ENCODE measurements at regions of chr14 and their contacts with region 1.

Region 1: GRCh38 chr14:24051789-24052655 is at the start of gene CARMIL3:
- DNase-seq: peak; percentile 12 to 82 (median 56)
- ATAC-seq: peak; percentile 75
- H3K4me3 ChIP-seq: peak within 1 kb of the TSS; percentile 72 to 76
- H3K4me3 Mint-ChIP-seq: peak within 1 kb of the TSS; percentile 88
- H3K27ac ChIP-seq: no peak within 1 kb of the TSS
- H3K27ac Mint-ChIP-seq: peak within 1 kb of the TSS; percentile 64
- H3K4me1 ChIP-seq: peaks cover 18% of the 10 kb centered on the region
- H3K4me1 Mint-ChIP-seq: peaks cover 14% of the 10 kb centered on the region
- H3K27me3 ChIP-seq: no peaks in the 10 kb centered on the region
- H3K27me3 Mint-ChIP-seq: peaks cover 11% of the 10 kb centered on the region
- CTCF ChIP-seq: no peak
- total RNA-seq, gene CARMIL3: 0.14 to 0.19 TPM

Region 2: DNA sequence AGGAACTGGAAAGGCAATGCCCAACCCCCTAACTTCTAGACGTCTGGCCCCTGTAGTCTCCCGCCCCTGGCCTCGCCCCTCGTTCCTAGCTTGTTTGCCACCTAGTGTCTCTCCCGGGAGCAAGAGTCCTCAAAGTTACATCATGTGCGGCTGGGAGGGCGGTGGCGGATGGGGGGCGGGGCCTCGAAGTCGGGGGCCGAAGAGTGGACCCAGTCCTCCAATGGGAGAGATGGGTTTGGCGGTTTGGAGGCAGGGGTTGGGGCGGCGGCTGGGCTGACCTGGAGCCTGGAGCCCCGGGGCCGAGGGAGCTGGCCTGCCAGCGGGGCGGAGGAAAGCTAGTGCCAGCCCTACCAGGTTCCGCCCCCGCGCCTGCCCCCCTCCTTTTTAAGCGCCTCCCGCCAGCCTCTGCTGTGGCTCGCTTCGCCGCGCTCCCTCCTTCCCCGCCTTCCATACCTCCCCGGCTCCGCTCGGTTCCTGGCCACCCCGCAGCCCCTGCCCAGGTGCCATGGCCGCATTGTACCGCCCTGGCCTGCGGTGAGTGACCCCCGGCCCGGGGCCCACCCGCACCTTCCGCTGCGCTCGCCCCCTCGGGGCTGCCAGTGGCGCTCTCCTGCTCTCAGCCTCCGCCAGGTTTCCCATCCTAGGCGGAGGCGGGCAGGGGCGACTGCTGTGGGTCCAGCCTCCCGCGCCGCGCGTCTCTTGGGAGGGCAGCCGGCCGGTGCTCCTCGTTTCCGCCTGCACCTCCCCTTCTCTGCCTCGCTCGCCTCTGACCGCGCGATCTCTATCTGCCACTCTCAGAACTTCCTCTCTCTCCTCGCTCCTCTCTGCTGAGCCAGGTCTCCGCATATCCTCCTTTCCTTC is 42.1 kb after region 1 on chr14 and contains the start of gene PCK2:
- CTCF ChIA-PET with region 1: interaction called, 873 read pairs
- POLR2A ChIA-PET with region 1: interaction called, 15 read pairs
- intact Hi-C with region 1: no loop called
- DNase-seq: peak; percentile 39 to 82 (median 68)
- ATAC-seq: peak; percentile 79
- H3K4me3 ChIP-seq: peak within 1 kb of the TSS; percentile 69 to 99
- H3K4me3 Mint-ChIP-seq: peak within 1 kb of the TSS; percentile 98
- H3K27ac ChIP-seq: peak within 1 kb of the TSS; percentile 69 to 76
- H3K27ac Mint-ChIP-seq: peak within 1 kb of the TSS; percentile 98
- H3K4me1 ChIP-seq: peaks cover 19% of the 10 kb centered on the region
- H3K4me1 Mint-ChIP-seq: peaks cover 37% of the 10 kb centered on the region
- H3K27me3 ChIP-seq: no peaks in the 10 kb centered on the region
- H3K27me3 Mint-ChIP-seq: no peaks in the 10 kb centered on the region
- CTCF ChIP-seq: no peak
- total RNA-seq, gene PCK2: 4.9 to 5.2 TPM

Region 3: GRCh38 chr14:24135834-24136542 is 84.0 kb after region 1 on chr14 and contains the start of gene PSME1:
- CTCF ChIA-PET with region 1: no interaction called
- POLR2A ChIA-PET with region 1: no interaction called
- intact Hi-C with region 1: loop called in 1 of 2 experiments (anchors 1 kb)
- DNase-seq: peak; percentile 89 to 97 (median 94)
- ATAC-seq: peak; percentile 98
- H3K4me3 ChIP-seq: peak within 1 kb of the TSS; percentile 78 to 91
- H3K4me3 Mint-ChIP-seq: peak within 1 kb of the TSS; percentile 90
- H3K27ac ChIP-seq: peak within 1 kb of the TSS; percentile 81 to 83
- H3K27ac Mint-ChIP-seq: peak within 1 kb of the TSS; percentile 93
- H3K4me1 ChIP-seq: peaks cover 54% of the 10 kb centered on the region
- H3K4me1 Mint-ChIP-seq: peaks cover 65% of the 10 kb centered on the region
- H3K27me3 ChIP-seq: no peaks in the 10 kb centered on the region
- H3K27me3 Mint-ChIP-seq: no peaks in the 10 kb centered on the region
- CTCF ChIP-seq: no peak
- total RNA-seq, gene PSME1: 200 to 207 TPM

Region 4: GRCh38 chr14:24246765-24247212 is 194.8 kb after region 1 on chr14:
- CTCF ChIA-PET with region 1: no interaction called
- POLR2A ChIA-PET with region 1: no interaction called
- intact Hi-C with region 1: no loop called
- DNase-seq: peak in 3 of 9 experiments; percentile 20 to 72 (median 50)
- ATAC-seq: no peak
- H3K4me3 ChIP-seq: peak overlapping the region in 1 of 2 experiments; percentile 21
- H3K4me3 Mint-ChIP-seq: peak overlapping the region; percentile 76
- H3K27ac ChIP-seq: peak overlapping the region in 1 of 2 experiments; percentile 80
- H3K27ac Mint-ChIP-seq: peak overlapping the region; percentile 93
- H3K4me1 ChIP-seq: peaks cover 9% of the 10 kb centered on the region
- H3K4me1 Mint-ChIP-seq: peaks cover 19% of the 10 kb centered on the region
- H3K27me3 ChIP-seq: no peaks in the 10 kb centered on the region
- H3K27me3 Mint-ChIP-seq: no peaks in the 10 kb centered on the region
- CTCF ChIP-seq: no peak

Measured in CD8-positive, alpha-beta T cell (primary cell).